Left ventricle myocardium inferior (tissue), 1 donor: ENCODE measurements at regions of chr19 and their contacts with region 1.

Region 1: GRCh38 chr19:41563854-41564514 is 12.0 kb upstream of the CEACAM21 start:
- DNase-seq: no peak
- H3K4me3 ChIP-seq: peak overlapping the region; percentile 46
- H3K27ac ChIP-seq: no peak overlapping the region
- H3K4me1 ChIP-seq: peaks cover 20% of the 10 kb centered on the region
- H3K27me3 ChIP-seq: peaks cover 96% of the 10 kb centered on the region
- CTCF ChIP-seq: no peak

Region 2: DNA sequence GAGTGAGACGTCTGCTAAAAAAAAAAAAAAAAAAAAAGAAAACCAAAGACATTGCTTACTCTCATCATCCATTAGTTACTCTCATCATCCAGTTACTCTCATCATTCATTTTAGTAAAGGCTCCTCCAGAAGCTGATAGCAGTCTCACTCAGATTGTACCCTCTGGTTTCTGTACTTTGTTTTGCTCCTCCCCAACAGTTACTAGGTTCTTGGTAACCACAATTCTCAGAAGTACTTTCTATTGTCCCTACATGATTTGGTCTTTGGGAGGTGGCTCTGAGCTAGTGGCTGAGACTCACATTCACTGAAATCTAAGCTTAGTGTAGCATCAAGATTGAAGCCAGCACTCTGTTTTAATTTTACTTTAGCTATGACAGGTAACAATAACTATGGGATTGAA is 106.7 kb before region 1 on chr19:
- intact Hi-C with region 1: loop called (anchors 10 kb)
- DNase-seq: no peak
- H3K4me3 ChIP-seq: no peak overlapping the region
- H3K27ac ChIP-seq: peak overlapping the region; percentile 78
- H3K4me1 ChIP-seq: peaks cover 30% of the 10 kb centered on the region
- H3K27me3 ChIP-seq: peaks cover 47% of the 10 kb centered on the region
- CTCF ChIP-seq: no peak